Left cardiac atrium (tissue), 4 donors: ENCODE measurements at regions of chr1 and their contacts with region 1.

Region 1: GRCh38 chr1:88655685-88656299 is 28.3 kb upstream of the PKN2 start:
- DNase-seq: no peak
- ATAC-seq: no peak

Region 2: GRCh38 chr1:88722492-88722891 is 66.7 kb after region 1 on chr1:
- intact Hi-C with region 1: no loop called
- DNase-seq: no peak
- ATAC-seq: no peak

Region 3: DNA sequence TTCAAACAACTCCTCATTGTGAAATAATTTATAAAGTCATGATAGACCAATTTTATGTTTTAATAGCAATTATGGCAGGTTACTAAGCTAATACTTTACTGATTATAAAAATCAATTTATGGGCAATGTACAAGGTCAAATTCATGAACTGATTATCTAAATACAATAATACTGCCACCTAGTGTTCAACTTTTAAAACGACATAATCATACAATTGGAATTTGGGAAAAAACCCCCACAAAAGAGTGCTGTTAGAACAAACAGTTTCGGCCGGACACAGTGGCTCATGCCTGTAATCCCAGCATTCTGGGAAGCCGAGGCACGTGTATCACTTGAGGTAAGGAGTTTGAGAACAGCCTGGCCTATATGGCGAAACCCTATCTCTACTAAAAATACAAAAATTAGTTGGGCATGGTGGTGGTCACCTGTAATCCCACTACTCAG is 221.6 kb after region 1 on chr1:
- intact Hi-C with region 1: loop called (anchors 10 kb)
- DNase-seq: no peak
- ATAC-seq: peak in 1 of 2 donors; percentile 9

Region 4: GRCh38 chr1:88888750-88889149 is 233.0 kb after region 1 on chr1:
- intact Hi-C with region 1: loop called in 1 of 2 experiments (anchors 10 kb)
- DNase-seq: no peak
- ATAC-seq: no peak